Activated naive CD4-positive, alpha-beta T cell treated with anti-CD3 and anti-CD28 coated beads for 36 hours (primary cell): ENCODE measurements at regions of chr15 and their contacts with region 1.

Region 1: DNA sequence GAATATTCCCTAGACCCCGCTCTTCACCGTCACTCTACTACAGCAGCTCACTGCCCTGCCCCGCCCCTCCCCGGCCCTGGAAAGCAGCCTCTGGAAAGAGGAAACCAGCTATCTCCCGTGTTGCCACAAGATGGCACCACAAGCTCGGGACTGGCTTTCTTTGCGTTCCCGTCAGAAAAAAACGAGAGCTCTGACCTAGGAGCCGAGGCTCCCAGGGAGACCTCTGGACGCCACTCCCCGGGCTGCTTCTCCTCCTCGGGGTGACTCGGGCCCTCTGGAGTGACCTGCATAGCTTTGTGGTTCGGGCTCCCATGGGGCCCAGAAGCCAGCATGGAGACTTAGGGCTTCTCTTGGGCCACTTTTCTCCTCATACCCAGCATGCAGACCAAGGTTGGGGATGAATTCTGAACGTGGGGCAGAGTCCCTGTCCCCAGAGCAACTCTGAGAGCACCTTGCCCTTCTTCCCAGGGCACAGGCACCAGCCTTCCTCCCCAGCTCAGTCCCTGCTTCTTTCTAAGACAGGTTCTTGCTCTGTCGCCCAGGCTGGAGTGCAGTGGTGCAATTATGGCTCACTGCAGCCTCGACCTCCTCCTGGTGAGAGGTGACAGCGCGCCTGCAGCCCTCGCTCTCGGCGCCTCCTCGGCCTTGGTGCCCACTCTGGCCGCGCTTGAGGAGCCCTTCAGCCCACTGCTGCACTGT is 19.0 kb downstream of the STOML1 start:
- DNase-seq: peak; percentile 92
- H3K4me3 Mint-ChIP-seq: peak overlapping the region; percentile 15
- H3K27ac Mint-ChIP-seq: no peak overlapping the region
- H3K4me1 Mint-ChIP-seq: peaks cover 31% of the 10 kb centered on the region
- H3K27me3 Mint-ChIP-seq: no peaks in the 10 kb centered on the region

Region 2: DNA sequence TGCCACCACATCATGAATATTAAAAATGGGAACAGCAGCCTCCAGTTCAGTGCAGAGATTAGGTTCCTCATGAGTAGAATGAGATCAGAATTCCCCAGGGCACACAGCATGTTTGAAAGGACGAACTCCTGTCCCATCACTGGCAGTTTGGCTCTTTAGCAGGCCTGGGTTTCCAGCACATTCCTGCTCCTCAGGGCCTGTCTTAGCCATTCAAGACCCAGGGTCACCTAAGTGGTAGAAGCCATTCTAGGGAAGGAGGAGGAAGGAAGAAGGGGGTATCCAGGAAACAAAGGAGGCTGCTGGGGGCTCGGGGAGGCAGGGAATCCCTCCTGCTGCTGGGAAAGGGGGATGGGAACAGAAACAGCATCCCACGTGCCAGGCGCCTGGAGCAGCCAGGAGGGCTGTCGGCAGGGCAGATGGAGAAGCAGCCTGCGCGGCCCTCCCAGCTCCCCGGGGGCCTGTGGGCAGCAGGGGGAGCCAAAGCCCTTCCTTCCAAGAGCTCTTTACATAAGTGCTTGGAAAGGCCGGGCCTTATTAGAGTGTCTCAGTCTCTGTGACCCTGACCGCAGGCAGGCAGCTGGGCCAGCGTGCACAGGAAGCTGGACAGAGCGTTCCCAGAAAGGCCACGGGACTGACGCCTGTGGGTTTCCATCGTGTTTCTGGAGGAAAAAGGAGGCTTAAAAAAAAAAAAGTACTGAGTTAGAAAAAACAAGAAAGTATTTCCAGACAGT is 22.1 kb before region 1 on chr15:
- CTCF ChIA-PET with region 1: interaction called, 16 read pairs
- intact Hi-C with region 1: no loop called
- DNase-seq: peak; percentile 83
- H3K4me3 Mint-ChIP-seq: no peak overlapping the region
- H3K27ac Mint-ChIP-seq: no peak overlapping the region
- H3K4me1 Mint-ChIP-seq: peaks cover 3% of the 10 kb centered on the region
- H3K27me3 Mint-ChIP-seq: no peaks in the 10 kb centered on the region

Region 3: DNA sequence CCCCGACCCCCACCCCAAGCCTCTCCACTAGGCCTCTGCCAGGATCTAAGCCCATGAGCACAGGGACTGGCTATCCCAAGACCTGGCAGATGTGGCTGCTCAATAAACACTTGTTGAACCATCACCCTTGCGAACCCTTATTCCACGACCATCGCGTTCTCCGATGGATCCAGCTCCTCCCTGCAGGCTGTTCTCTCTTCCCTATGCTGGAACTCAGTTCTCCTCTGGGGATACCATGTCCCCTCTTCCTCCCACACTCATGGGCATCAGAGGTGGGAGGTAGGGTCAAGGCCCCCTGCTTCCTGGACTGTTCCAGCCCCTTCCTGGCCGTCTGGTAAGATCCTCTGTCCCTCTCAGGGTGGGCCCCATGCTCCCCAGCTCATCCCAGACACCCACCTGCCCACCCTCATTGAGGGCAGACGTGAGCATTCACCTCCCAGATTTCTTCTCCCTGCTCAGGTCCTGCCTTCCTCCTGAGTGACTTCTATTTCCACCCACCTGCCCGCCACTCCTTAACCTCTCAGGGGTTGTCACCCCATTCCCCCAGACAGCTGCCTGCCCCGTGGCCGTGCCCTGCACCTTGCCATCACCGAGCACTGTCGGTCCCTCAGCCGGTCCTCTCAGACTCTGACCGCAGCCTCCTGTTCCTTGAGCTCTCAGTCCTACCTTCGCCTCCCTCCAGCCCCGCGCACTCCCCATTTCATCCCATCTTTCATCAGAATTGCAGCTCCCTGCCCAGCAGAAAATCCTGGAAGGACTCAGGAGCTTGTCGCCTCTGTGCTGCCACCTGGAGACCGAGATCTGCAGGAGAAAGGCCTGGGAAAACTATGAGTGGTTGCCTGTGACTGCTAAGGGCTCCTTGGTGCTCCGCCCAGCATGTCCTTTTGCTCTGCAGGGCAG is 63.4 kb after region 1 on chr15:
- CTCF ChIA-PET with region 1: interaction called, 29 read pairs
- intact Hi-C with region 1: loop called (anchors 1 kb)
- DNase-seq: peak; percentile 25
- H3K4me3 Mint-ChIP-seq: no peak overlapping the region
- H3K27ac Mint-ChIP-seq: peak overlapping the region; percentile 10
- H3K4me1 Mint-ChIP-seq: no peaks in the 10 kb centered on the region
- H3K27me3 Mint-ChIP-seq: no peaks in the 10 kb centered on the region

Region 4: DNA sequence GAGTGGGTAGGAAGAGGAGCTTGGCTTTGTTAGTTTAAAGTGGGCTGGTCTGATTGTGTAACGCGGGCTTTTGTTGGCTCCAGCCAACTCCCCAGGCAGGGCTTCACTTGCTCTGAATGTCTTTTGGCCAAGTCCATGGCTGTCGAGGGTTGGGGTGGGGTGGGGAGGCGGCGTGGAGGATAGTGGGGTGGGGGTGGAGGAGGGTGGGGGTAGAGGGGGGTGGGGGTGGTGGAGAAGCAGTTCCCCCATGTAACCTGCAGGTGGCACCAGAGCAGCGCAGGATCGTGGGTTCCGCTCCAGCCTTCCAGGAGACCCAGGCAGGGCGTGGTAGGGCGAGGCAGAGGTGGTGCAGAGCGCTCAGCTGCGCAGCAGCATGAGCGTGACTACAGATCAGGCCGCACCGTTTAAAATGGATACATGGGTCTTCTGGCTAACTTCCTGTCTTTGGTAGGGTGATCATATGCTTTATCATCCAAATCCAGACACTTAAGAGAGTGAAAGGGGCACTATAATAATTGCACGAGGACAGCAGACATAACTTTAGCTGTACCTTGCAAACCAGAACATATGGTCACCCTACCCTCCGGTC is 80.9 kb after region 1 on chr15:
- CTCF ChIA-PET with region 1: interaction called, 167 read pairs
- intact Hi-C with region 1: loop called (anchors 2 kb)
- DNase-seq: peak; percentile 82
- H3K4me3 Mint-ChIP-seq: peak overlapping the region; percentile 23
- H3K27ac Mint-ChIP-seq: no peak overlapping the region
- H3K4me1 Mint-ChIP-seq: peaks cover 5% of the 10 kb centered on the region
- H3K27me3 Mint-ChIP-seq: no peaks in the 10 kb centered on the region

Region 5: DNA sequence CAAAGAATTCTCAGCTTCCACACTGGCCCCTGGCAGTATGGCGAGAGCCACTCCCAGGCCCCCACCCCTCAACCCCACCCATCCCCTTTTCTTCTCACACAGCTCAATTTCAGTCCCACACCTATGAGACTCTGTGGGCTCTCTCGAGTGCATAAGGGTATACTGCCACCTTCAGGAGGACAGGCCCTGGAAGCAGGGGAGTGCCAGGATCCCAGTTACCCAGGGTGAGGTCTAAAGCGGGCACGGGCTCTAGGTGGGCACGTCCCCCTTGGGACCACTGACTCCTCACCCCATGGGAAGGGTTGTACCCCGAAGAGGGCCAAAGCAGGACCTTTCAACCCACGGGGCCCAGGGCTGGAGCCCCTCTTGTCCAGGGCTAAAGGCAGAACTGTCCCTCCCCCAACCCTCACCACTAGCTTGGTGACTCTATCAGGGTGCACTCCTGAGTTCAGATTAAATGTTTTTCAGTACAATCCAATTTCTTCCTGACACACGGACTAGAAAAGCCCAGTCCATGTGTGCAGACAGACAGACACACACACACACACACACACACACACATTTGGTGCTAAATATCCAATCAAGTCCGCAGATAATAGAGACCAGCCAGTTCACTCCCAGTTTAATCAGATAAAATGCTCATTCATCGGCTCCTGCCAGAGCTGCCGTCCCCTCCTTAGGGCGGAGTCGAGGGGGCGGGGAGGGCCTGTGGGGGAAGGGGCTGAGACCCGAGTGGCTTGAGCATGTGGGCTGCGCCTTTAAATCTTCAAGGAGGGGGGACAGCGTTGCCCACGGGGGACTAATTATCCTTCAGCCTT is 334.9 kb after region 1 on chr15:
- CTCF ChIA-PET with region 1: interaction called, 7 read pairs
- intact Hi-C with region 1: loop called (anchors 1 kb)
- DNase-seq: peak; percentile 61
- H3K4me3 Mint-ChIP-seq: no peak overlapping the region
- H3K27ac Mint-ChIP-seq: no peak overlapping the region
- H3K4me1 Mint-ChIP-seq: no peaks in the 10 kb centered on the region
- H3K27me3 Mint-ChIP-seq: peaks cover 10% of the 10 kb centered on the region